ENCODE measurements at regions of chr7 and their contacts with region 1.

Region 1: DNA sequence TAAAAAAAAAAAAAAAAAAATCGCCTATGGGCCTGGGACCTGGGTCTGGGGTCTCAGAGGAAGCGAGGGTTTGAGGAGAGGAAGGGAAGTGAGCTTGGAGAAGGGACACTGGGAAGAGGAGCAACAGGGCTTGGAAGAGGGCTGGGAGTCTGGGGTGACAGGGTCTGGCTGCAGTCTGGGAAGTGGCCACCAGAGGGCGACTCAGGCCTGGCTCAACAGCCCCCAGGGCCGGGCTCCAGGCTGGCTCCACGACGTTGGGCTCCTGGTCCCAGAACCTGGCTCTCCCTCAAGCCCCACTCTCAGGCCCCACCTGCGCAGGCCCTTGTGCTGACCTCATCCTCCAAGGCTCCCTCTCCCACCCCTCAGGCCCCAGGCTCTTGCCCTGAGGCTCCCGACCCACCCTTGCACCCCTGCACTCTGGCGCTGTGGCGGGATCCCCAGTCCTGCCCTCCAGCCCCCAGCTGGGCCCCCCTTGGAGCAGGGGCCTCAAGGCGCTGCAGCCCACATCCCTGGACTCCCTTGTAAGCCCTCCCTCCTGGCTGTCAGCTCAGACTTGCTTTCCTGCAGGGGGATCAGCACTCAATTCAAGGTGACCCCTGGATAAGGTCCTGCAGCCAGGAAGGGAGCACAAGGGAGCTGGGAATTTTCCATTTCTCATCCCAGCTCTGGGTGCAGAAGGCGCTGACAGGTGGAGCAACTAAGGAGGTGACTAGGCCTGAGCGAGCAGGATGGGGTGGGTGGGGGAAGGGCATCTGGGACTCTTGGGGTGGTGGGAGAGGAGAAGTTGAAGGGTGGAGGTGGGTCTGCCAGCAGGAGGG is 5.4 kb upstream of the SPACDR start:
- DNase-seq: peak; percentile 69 to 86 (median 80)
- H3K4me3 ChIP-seq: no peak overlapping the region
- H3K4me3 Mint-ChIP-seq: no peak overlapping the region
- H3K27ac ChIP-seq: no peak overlapping the region
- H3K27ac Mint-ChIP-seq: peak overlapping the region in 7 of 8 donors; percentile 64 to 83 (median 70)
- H3K4me1 ChIP-seq: peaks cover 24% of the 10 kb centered on the region
- H3K4me1 Mint-ChIP-seq: peaks cover 17 to 46% (median 31%) of the 10 kb centered on the region in 3 donors
- H3K27me3 ChIP-seq: no peaks in the 10 kb centered on the region
- H3K27me3 Mint-ChIP-seq: no peaks in the 10 kb centered on the region

Region 2: DNA sequence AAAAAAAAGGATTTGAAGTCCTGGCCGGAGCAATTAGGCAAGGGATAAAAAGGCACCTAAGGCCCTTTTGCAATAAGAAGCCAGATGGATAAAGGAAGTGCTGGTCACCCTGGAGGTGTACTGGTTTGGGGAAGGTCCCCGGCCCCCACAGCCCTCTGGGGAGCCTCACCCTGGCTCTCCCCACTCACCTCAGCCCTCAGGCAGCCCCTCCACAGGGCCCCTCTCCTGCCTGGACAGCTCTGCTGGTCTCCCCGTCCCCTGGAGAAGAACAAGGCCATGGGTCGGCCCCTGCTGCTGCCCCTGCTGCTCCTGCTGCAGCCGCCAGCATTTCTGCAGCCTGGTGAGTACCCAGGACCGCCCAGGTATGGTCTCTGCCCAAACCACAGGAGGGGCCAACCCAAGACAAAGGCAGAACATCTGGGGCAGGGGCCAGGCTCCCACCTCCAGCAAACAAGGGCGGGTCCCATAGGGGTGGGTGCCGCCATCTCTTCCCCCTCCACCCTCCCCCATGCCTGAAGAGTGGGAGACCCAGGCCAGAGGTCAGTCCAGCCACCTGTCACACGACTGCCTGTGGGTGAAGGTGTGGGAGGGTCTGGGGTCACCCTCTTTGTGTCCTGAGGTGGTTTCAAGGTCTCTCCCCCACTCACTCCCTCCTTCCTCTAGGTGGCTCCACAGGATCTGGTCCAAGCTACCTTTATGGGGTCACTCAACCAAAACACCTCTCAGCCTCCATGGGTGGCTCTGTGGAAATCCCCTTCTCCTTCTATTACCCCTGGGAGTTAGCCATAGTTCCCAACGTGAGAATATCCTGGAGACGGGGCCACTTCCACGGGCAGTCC is 111.2 kb before region 1 on chr7 and contains the start of gene PILRB:
- CTCF ChIA-PET with region 1: no interaction called
- POLR2A ChIA-PET with region 1: no interaction called
- DNase-seq: no peak
- H3K4me3 ChIP-seq: no peak within 1 kb of the TSS
- H3K4me3 Mint-ChIP-seq: no peak within 1 kb of the TSS
- H3K27ac ChIP-seq: no peak within 1 kb of the TSS
- H3K27ac Mint-ChIP-seq: peak within 1 kb of the TSS in 6 of 8 donors; percentile 17 to 93 (median 68)
- H3K4me1 ChIP-seq: peaks cover 15% of the 10 kb centered on the region
- H3K4me1 Mint-ChIP-seq: peaks cover 9 to 25% (median 17%) of the 10 kb centered on the region in 3 donors
- H3K27me3 ChIP-seq: no peaks in the 10 kb centered on the region
- H3K27me3 Mint-ChIP-seq: no peaks in the 10 kb centered on the region
- total RNA-seq, gene PILRB: 33.5 to 33.7 TPM

Region 3: GRCh38 chr7:100493476-100494264 is 24.2 kb after region 1 on chr7:
- CTCF ChIA-PET with region 1: interaction called, 20 read pairs
- POLR2A ChIA-PET with region 1: no interaction called
- DNase-seq: peak in 4 of 5 donors; percentile 18 to 64 (median 42)
- H3K4me3 ChIP-seq: peak overlapping the region; percentile 32
- H3K4me3 Mint-ChIP-seq: peak overlapping the region; percentile 9 to 77 (median 70)
- H3K27ac ChIP-seq: no peak overlapping the region
- H3K27ac Mint-ChIP-seq: peak overlapping the region in 1 of 8 donors; percentile 29
- H3K4me1 ChIP-seq: no peaks in the 10 kb centered on the region
- H3K4me1 Mint-ChIP-seq: peaks cover 6 to 22% (median 9%) of the 10 kb centered on the region in 3 donors
- H3K27me3 ChIP-seq: no peaks in the 10 kb centered on the region
- H3K27me3 Mint-ChIP-seq: peaks cover 2 to 3% of the 10 kb centered on the region in 2 donors

Measured in CD8-positive, alpha-beta memory T cell (primary cell).